ENCODE measurements at regions of chr4 and their contacts with region 1.

Region 1: GRCh38 chr4:108018040-108018883 is 28.6 kb downstream of the HADH start:
- DNase-seq: peak; percentile 54
- H3K4me3 ChIP-seq: no peak overlapping the region
- H3K27ac ChIP-seq: no peak overlapping the region
- H3K4me1 ChIP-seq: no peaks in the 10 kb centered on the region
- H3K27me3 ChIP-seq: no peaks in the 10 kb centered on the region
- CTCF ChIP-seq: peak; percentile 84 to 89

Region 2: GRCh38 chr4:107757864-107758476 is 260.3 kb before region 1 on chr4:
- CTCF ChIA-PET with region 1: no interaction called
- dilution Hi-C with region 1: no loop called
- in situ Hi-C with region 1: no loop called
- intact Hi-C with region 1: loop called (anchors 10 kb)
- DNase-seq: no peak
- H3K4me3 ChIP-seq: no peak overlapping the region
- H3K27ac ChIP-seq: no peak overlapping the region
- H3K4me1 ChIP-seq: no peaks in the 10 kb centered on the region
- H3K27me3 ChIP-seq: no peaks in the 10 kb centered on the region
- CTCF ChIP-seq: peak; percentile 45

Region 3: GRCh38 chr4:107906458-107907100 is 111.7 kb before region 1 on chr4:
- CTCF ChIA-PET with region 1: no interaction called
- dilution Hi-C with region 1: no loop called
- in situ Hi-C with region 1: no loop called
- intact Hi-C with region 1: no loop called
- DNase-seq: no peak
- H3K4me3 ChIP-seq: no peak overlapping the region
- H3K27ac ChIP-seq: no peak overlapping the region
- H3K4me1 ChIP-seq: no peaks in the 10 kb centered on the region
- H3K27me3 ChIP-seq: no peaks in the 10 kb centered on the region
- CTCF ChIP-seq: no peak

Region 4: DNA sequence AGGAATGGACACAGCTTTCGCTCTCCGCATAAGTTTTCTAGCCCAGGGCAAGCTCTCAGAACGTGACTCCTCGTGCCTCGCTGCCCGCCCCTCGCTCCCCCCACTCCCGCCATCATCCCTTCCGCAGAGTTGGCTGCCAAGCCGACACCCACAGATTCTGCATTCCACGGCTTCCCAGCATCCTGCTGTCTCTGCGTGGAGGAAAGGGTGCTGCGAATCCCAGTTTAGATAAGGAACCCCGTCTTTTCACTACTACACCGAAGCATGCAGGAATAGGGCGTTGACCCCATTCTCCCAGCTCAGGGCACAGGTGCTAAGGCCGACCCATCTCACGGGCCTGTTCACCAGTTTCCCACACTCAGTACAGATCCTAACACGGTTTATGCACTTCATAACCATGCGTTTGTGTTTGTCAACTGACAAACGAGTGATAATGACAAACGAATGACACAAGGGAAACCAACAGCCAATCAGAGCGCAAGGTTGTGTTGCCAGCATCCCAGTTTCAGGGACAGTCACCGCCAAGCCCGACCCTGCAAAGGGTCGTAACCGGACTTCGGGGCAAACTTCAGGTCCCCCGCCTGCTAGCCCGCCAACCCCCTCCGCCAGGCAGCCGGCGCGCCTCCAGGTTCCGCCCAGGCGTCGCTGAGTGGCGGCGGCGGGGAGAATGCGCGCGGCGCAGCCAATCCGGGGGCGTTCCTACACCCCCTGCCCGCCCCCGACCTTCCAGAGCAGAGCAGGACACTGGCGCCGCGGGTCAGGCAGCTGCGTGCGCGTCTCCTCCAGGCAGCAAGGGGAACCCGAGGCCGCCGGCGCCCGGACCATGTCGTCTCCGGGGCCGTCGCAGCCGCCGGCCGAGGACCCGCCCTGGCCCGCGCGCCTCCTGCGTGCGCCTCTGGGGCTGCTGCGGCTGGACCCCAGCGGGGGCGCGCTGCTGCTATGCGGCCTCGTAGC is 87.2 kb before region 1 on chr4 and contains the start of gene CYP2U1:
- CTCF ChIA-PET with region 1: no interaction called
- dilution Hi-C with region 1: no loop called
- in situ Hi-C with region 1: no loop called
- intact Hi-C with region 1: loop called (anchors 5 kb)
- DNase-seq: peak; percentile 73
- H3K4me3 ChIP-seq: peak within 1 kb of the TSS; percentile 52 to 78 (median 66)
- H3K27ac ChIP-seq: no peak within 1 kb of the TSS
- H3K4me1 ChIP-seq: peaks cover 24% of the 10 kb centered on the region
- H3K27me3 ChIP-seq: no peaks in the 10 kb centered on the region
- CTCF ChIP-seq: peak in 1 of 2 donors; percentile 8
- total RNA-seq, gene CYP2U1: 7.5 to 30.7 TPM

Region 5: GRCh38 chr4:108109997-108110416 is 91.7 kb after region 1 on chr4:
- CTCF ChIA-PET with region 1: no interaction called
- dilution Hi-C with region 1: loop called (anchors 5 kb)
- in situ Hi-C with region 1: no loop called
- intact Hi-C with region 1: no loop called
- DNase-seq: no peak
- H3K4me3 ChIP-seq: no peak overlapping the region
- H3K27ac ChIP-seq: no peak overlapping the region
- H3K4me1 ChIP-seq: no peaks in the 10 kb centered on the region
- H3K27me3 ChIP-seq: no peaks in the 10 kb centered on the region
- CTCF ChIP-seq: no peak

Region 6: GRCh38 chr4:108181704-108182103 is 163.4 kb after region 1 on chr4:
- CTCF ChIA-PET with region 1: no interaction called
- dilution Hi-C with region 1: no loop called
- in situ Hi-C with region 1: no loop called
- intact Hi-C with region 1: loop called (anchors 5 kb)
- DNase-seq: no peak
- H3K4me3 ChIP-seq: no peak overlapping the region
- H3K27ac ChIP-seq: no peak overlapping the region
- H3K4me1 ChIP-seq: no peaks in the 10 kb centered on the region
- H3K27me3 ChIP-seq: peaks cover 5% of the 10 kb centered on the region
- CTCF ChIP-seq: no peak